Activated T-helper 2 cell treated with anti-CD3 and anti-CD28 coated beads, Interferon-gamma antibody, Interleukin-2, Interleukin-4, amounts not matched to agents 10 μg/mL and 5 μg/mL and 100 μg/mL, durations not matched to agents 14 hours and 24 hours and 36 hours (primary cell): ENCODE measurements at regions of chr13 and their contacts with region 1.

Region 1: GRCh38 chr13:51523082-51523518 is 61.2 kb upstream of the WDFY2 start:
- DNase-seq: no peak
- H3K4me3 Mint-ChIP-seq: no peak overlapping the region
- H3K27ac Mint-ChIP-seq: no peak overlapping the region
- H3K4me1 Mint-ChIP-seq: peaks cover 24% of the 10 kb centered on the region
- H3K27me3 Mint-ChIP-seq: no peaks in the 10 kb centered on the region

Region 2: DNA sequence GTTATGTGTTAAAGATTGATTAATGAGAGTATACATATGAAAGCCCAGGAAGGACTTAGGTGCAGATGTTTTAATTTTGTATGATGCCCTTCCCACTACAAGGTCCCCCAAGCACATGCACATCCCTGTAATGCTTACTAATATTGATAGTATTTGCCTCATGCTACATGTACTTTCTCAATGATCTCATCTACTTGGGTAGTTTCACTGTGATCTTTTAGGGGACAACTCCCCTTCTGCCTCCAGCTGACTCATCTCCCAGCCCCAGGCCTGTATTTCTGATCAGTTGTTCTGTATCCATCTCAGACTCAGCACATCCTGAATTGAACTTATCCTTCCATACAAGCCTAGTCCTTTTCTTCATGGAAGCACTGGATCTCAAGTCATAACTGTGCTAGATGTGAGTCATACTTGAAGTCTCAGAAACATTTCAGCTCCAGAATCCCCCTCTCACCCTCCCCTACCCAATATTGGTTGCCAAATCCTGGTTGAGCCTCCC is 20.9 kb before region 1 on chr13:
- intact Hi-C with region 1: loop called (anchors 1 kb)
- DNase-seq: no peak
- H3K4me3 Mint-ChIP-seq: no peak overlapping the region
- H3K27ac Mint-ChIP-seq: peak overlapping the region; percentile 72
- H3K4me1 Mint-ChIP-seq: peaks cover 17% of the 10 kb centered on the region
- H3K27me3 Mint-ChIP-seq: peaks cover 4% of the 10 kb centered on the region

Region 3: DNA sequence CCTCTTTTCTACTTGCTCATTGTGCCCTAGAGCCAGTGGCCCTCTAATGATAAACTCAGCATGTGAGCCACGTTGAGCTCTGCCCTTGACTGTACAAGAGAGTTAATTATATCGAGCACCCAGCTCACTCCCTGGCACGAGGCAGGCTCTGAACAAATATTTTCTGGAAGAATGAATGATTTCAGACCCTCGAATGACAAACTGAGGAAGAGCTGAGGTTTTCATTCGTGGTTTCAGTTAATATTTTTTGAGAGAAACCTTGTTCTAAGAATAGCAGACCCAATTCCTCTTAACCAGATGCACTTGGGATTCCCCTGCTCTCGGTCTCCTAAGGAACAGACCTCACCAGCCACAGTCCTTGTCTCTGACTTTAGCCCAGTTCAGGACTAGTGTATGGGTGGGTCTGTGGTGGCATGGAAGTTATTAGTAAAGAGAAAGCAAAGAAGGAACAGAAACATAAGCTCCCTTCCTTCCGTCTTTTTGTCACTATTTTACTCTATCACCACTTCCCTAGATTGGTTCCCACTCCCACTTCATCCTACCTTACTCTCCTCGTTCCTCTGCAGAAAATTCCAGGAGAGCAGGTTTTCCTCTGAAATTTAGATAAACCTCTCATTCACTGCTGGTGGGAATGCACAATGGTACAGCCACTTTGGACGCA is 39.0 kb after region 1 on chr13:
- intact Hi-C with region 1: loop called (anchors 2 kb)
- DNase-seq: no peak
- H3K4me3 Mint-ChIP-seq: no peak overlapping the region
- H3K27ac Mint-ChIP-seq: no peak overlapping the region
- H3K4me1 Mint-ChIP-seq: peaks cover 35% of the 10 kb centered on the region
- H3K27me3 Mint-ChIP-seq: no peaks in the 10 kb centered on the region

Region 4: DNA sequence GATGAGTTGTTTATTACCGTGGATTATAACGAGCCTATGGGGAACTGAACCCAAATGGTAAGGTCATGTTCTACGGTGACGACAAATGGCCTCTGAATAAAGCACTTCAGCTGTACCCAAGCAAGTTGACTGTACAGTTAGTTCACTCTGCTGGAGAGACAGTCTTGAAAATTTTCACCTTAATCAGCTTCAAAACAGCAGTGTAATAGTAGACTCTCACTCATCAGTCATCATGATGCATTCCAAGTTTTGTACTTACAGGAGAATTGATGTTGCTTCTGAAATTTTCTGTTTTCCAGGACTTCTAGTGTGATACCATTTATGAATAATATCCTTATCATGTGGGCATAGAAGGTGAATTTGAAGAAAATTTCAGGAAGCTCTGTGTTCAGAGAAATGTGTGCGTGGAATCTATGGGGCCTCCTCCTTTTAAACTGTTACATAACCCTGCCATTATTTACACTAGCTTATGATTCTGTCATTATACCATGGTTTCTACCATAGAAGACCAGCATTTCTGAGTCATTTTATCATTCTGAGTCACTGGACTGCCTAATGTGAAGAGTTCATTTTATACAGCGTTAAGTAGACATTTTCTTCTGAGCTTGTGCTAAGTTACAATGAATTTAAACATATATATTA is 158.1 kb after region 1 on chr13:
- intact Hi-C with region 1: no loop called
- DNase-seq: no peak
- H3K4me3 Mint-ChIP-seq: no peak overlapping the region
- H3K27ac Mint-ChIP-seq: no peak overlapping the region
- H3K4me1 Mint-ChIP-seq: peaks cover 3% of the 10 kb centered on the region
- H3K27me3 Mint-ChIP-seq: no peaks in the 10 kb centered on the region